Activated B cell treated with CpG ODN at 0.5 μM for 24 hours (primary cell): ENCODE measurements at regions of chr3 and their contacts with region 1.

Region 1: DNA sequence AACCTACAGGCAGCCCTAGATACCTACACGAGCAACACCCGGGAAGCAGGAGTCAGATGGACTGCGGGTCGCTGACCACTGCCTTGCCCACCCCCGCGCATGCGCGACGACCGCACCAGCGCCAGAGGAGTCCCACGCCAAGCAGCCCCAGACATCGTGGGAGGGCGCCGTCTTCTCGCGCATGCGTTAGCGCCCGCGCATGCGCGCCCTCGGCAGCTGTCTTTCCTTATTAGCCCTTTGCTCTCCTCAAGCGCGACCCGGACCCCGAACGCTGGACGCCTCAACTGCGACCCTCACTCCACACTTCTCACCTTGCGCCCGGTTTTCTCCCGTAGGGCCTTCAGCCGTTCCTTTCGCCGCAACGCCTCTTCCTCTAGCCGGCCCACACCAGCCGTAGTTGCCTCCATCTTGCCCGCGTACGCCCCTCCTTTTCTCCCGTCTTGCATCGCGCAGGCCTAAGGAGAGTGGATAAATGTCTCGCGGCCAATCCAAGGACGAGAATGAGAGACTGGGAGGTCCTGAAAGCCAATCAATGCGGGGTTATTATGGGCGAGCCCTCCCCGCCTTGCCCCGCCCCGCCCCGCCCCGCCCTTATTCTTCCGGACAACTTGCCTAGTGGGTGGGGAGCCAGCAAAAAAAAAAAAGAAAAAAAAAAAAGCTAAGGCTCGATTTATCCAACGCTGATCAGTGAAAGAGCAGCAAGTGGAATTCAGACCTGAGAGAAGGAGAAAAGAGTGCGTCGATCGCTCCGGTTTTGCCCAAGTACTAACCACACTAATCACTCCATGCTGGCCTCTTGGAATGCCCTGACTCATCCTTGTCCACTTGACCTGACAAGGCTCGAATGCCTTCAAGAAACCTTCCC is at the start of gene CCDC12:
- DNase-seq: peak; percentile 83
- ATAC-seq: peak; percentile 77
- H3K4me3 Mint-ChIP-seq: peak within 1 kb of the TSS; percentile 97
- H3K27ac Mint-ChIP-seq: peak within 1 kb of the TSS; percentile 97
- H3K4me1 Mint-ChIP-seq: peaks cover 76% of the 10 kb centered on the region
- H3K27me3 Mint-ChIP-seq: no peaks in the 10 kb centered on the region
- CTCF ChIP-seq: no peak
- total RNA-seq, gene CCDC12: 93.8 and 98.4 TPM in 2 replicates

Region 2: GRCh38 chr3:46923559-46924350 is 52.8 kb before region 1 on chr3:
- CTCF ChIA-PET with region 1: interaction called, 6 read pairs
- POLR2A ChIA-PET with region 1: interaction called, 189 read pairs
- intact Hi-C with region 1: loop called (anchors 1 kb)
- DNase-seq: no peak
- ATAC-seq: no peak
- H3K4me3 Mint-ChIP-seq: peak overlapping the region; percentile 19
- H3K27ac Mint-ChIP-seq: peak overlapping the region; percentile 68
- H3K4me1 Mint-ChIP-seq: peaks cover 59% of the 10 kb centered on the region
- H3K27me3 Mint-ChIP-seq: no peaks in the 10 kb centered on the region
- CTCF ChIP-seq: no peak

Region 3: GRCh38 chr3:46953234-46954010 is 23.1 kb before region 1 on chr3:
- CTCF ChIA-PET with region 1: interaction called, 3 read pairs
- POLR2A ChIA-PET with region 1: interaction called, 40 read pairs
- intact Hi-C with region 1: loop called (anchors 1 kb)
- DNase-seq: no peak
- ATAC-seq: peak; percentile 79
- H3K4me3 Mint-ChIP-seq: peak overlapping the region; percentile 64
- H3K27ac Mint-ChIP-seq: peak overlapping the region; percentile 78
- H3K4me1 Mint-ChIP-seq: peaks cover 88% of the 10 kb centered on the region
- H3K27me3 Mint-ChIP-seq: no peaks in the 10 kb centered on the region
- CTCF ChIP-seq: no peak

Region 4: DNA sequence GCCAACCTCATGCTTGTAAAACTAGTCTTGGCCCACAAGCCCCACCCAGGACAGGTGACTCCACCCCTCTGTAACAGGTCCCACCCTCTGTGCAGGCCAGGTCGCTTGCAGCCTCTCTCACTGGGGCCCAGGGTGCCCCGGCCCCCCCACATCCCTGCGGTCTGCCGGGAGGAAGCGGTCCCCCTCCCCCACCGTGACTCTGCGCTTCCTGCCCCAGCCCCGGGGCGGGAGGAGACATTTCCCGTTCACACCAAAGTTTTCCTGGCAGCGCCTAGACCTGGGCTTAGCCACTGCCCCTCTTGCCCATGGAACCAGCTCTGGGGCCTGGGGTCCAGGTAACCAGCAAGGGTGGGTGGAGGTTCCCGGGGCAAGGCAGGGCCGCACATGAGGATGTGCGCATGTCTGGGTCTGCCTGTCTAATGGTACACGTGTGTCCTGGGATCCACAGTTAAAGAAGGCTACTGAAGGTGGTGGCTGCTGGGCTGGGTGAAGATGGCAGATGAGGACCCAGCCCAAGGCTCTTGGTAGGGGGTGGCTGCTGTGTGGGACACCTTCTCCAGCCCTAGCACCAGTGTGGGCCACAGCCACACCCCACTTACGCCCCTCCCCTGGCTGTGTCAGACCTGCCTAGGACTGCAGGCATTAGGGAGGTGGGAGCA is 11.3 kb after region 1 on chr3:
- CTCF ChIA-PET with region 1: interaction called, 5 read pairs
- POLR2A ChIA-PET with region 1: interaction called, 35 read pairs
- intact Hi-C with region 1: loop called (anchors 1 kb)
- DNase-seq: peak; percentile 69
- ATAC-seq: peak; percentile 87
- H3K4me3 Mint-ChIP-seq: peak overlapping the region; percentile 74
- H3K27ac Mint-ChIP-seq: peak overlapping the region; percentile 80
- H3K4me1 Mint-ChIP-seq: peaks cover 77% of the 10 kb centered on the region
- H3K27me3 Mint-ChIP-seq: no peaks in the 10 kb centered on the region
- CTCF ChIP-seq: no peak

Region 5: DNA sequence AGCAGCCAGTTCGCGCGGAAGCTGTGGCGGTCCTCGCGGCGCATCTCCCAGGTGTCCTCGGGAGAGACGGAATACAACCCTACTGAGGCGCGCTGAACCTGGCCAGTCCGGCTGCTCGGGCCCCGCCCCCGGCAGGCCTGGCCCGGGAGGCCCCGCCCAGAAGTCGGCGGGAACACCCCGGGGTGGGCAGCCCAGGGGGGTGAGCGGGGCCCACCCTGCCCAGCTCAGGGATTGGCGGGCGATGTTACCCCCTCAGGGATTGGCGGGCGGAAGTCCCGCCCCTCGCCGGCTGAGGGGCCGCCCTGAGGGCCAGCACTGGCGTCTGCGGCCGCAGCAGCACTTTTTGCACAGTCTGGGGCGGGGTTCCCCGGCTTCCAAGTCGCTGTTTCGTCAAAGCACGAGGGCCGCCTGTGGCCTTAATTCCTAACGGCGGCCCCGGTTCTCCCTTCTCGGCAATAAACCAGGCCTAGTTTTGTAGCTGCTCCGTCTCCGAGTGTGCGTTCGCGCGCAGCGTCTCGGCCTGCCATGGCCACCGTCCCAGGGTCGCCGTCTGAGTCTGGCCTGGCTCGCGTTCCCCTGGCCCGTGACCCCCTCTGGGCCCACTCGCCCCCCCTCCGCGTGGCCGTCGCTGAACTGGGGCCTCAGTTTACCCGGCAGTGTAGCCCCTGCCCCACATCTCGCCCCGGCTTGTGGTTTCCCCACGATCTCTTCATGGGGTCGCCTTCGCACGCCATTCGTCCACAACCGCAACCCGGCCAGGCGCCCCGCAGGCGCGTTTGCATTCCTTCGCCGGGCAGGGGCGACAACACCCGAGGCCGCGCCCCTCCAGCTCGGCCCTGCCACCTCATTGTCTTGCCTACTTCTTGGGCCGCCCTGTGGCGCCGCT is 32.9 kb after region 1 on chr3:
- CTCF ChIA-PET with region 1: no interaction called
- POLR2A ChIA-PET with region 1: interaction called, 15 read pairs
- intact Hi-C with region 1: loop called (anchors 1 kb)
- DNase-seq: peak; percentile 82
- ATAC-seq: peak; percentile 97
- H3K4me3 Mint-ChIP-seq: peak overlapping the region; percentile 81
- H3K27ac Mint-ChIP-seq: peak overlapping the region; percentile 73
- H3K4me1 Mint-ChIP-seq: peaks cover 13% of the 10 kb centered on the region
- H3K27me3 Mint-ChIP-seq: no peaks in the 10 kb centered on the region
- CTCF ChIP-seq: no peak

Region 6: DNA sequence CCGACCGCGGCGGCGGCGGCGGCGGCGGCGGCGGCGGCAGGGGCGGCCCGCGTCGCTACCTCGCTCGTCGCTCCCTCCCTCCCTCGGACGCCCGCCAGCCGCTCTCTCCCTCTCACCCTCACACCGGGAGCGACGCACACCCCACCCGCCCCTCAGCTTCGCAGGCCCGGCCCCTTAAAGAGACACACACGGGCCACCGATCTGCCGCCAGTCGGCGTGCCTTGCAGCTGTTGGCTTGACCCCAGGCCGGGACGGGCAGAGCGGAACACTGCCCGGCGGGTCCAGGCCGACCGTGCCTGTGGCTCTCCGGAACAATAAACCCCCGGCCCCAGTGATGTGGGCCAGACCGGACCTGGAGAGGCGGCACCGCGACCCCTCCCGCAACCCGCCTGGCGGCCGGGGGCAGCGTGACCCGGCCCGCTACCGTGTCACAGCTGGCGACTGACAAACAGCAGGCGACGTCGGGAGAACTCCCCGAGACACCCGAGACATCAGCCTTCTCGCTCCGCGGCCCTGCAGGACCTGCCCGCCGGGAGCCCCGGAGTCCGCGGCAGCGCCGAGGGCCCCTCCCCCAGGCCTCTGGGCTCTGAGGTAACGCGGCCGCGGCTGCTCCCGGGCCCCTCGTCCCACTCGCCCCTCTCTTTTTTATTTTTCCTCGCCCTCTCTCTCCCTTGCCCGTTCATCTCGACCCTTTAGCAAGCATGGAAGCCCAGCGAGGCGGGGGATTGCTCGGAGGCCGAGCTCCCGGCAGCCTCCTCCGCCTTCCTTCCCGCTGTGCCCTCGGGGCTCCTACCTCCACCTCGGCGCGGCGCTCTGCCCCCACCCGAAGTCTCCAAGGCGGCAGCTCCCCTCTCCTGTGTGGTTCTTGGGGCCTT is 187.7 kb after region 1 on chr3 and contains the start of gene SETD2:
- CTCF ChIA-PET with region 1: no interaction called
- POLR2A ChIA-PET with region 1: no interaction called
- intact Hi-C with region 1: loop called (anchors 5 kb)
- DNase-seq: peak; percentile 80
- ATAC-seq: peak; percentile 86
- H3K4me3 Mint-ChIP-seq: peak within 1 kb of the TSS; percentile 98
- H3K27ac Mint-ChIP-seq: peak within 1 kb of the TSS; percentile 96
- H3K4me1 Mint-ChIP-seq: peaks cover 53% of the 10 kb centered on the region
- H3K27me3 Mint-ChIP-seq: no peaks in the 10 kb centered on the region
- CTCF ChIP-seq: no peak
- total RNA-seq, gene SETD2: 56.9 and 65.7 TPM in 2 replicates

Region 7: GRCh38 chr3:47380601-47381316 is 404.2 kb after region 1 on chr3 and contains the start of gene PTPN23:
- CTCF ChIA-PET with region 1: no interaction called
- POLR2A ChIA-PET with region 1: interaction called, 4 read pairs
- intact Hi-C with region 1: loop called (anchors 5 kb)
- DNase-seq: peak; percentile 98
- ATAC-seq: peak; percentile 80
- H3K4me3 Mint-ChIP-seq: peak within 1 kb of the TSS; percentile 95
- H3K27ac Mint-ChIP-seq: peak within 1 kb of the TSS; percentile 96
- H3K4me1 Mint-ChIP-seq: peaks cover 49% of the 10 kb centered on the region
- H3K27me3 Mint-ChIP-seq: no peaks in the 10 kb centered on the region
- CTCF ChIP-seq: no peak
- total RNA-seq, gene PTPN23: 44.0 and 50.3 TPM in 2 replicates